HEK293 (cell line): ENCODE measurements at regions of chr7 and their contacts with region 1.

Region 1: DNA sequence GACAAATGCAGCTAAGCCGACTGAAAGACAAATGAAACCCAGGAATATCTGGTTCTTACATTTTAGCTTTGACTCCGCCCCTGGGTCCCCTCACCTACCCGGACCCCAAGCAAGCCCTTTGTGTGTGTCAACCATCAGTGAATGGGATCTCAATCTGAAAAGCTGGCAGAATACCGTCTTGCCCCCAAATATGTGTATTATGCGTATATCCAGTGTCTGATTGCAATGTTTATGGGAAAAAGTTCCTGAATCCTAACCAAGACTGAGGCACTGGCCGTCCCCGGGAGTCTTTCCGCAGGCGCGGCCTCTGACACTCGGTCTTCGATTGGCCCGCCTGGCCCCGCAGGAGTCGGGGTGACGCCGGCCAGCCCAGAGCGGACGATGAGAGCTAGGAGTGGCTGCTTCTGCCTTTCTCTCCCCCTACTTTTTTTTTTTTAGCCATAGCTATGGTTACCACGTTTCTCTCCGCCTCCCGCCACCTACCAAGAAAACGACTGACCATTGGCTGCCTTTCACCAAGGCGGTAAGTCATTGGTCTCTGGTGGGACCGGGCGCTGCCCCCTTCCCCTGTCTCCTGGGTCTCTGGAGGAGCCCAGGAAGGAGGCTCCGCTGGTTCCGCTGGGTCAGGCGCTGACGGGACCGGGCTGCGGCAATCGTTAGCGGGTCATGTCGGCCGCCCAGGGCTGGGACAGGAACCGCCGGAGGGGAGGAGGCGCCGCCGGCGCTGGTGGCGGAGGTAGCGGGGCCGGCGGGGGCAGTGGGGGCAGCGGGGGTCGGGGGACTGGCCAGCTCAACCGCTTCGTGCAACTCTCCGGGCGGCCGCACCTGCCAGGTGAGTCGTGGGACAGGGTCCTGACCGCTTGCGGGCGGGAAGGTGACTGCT is at the start of gene KLHDC10:
- H3K4me3 ChIP-seq: peak within 1 kb of the TSS; percentile 90
- H3K27ac ChIP-seq: peak within 1 kb of the TSS; percentile 68
- H3K4me1 ChIP-seq: no peaks in the 10 kb centered on the region
- CTCF ChIP-seq: no peak

Region 2: GRCh38 chr7:130037703-130038102 is 32.5 kb before region 1 on chr7:
- CTCF ChIA-PET with region 1: no interaction called
- POLR2A ChIA-PET with region 1: no interaction called
- H3K4me3 ChIP-seq: no peak overlapping the region
- H3K27ac ChIP-seq: no peak overlapping the region
- H3K4me1 ChIP-seq: no peaks in the 10 kb centered on the region
- CTCF ChIP-seq: no peak

Region 3: GRCh38 chr7:130084037-130084875 is 14.0 kb after region 1 on chr7:
- CTCF ChIA-PET with region 1: interaction called, 24 read pairs
- POLR2A ChIA-PET with region 1: interaction called, 3 read pairs
- H3K4me3 ChIP-seq: no peak overlapping the region
- H3K27ac ChIP-seq: no peak overlapping the region
- H3K4me1 ChIP-seq: 0 out of 2 replicates have a peak, but pooled peaks cover 4% of the 10 kb centered on the region
- CTCF ChIP-seq: no peak

Region 4: DNA sequence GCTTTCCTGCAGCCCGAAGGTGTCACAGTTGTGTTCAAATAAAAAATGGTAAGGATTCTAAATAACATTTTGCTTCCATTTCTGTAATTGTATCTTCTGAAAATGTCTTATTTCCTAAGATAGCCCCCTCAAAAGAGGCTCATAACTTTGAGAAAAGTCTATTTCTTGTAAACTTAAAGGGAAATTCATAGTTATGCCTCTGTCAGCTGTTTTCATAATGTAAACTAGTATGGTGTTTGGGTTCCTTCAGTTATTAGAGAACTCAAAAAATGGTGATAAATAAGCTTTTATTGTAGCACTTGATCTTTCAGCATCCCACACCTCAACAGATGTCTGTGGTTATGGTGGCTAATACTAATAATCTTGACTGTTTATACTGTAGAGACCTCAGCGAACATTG is 57.2 kb after region 1 on chr7:
- CTCF ChIA-PET with region 1: no interaction called
- POLR2A ChIA-PET with region 1: no interaction called
- H3K4me3 ChIP-seq: no peak overlapping the region
- H3K27ac ChIP-seq: no peak overlapping the region
- H3K4me1 ChIP-seq: peaks cover 7% of the 10 kb centered on the region; the same call in 1 of the 2 replicates
- CTCF ChIP-seq: no peak

Region 5: GRCh38 chr7:130205084-130205947 is 135.1 kb after region 1 on chr7 and contains the start of gene TMEM209:
- CTCF ChIA-PET with region 1: interaction called, 3 read pairs
- POLR2A ChIA-PET with region 1: interaction called, 14 read pairs
- H3K4me3 ChIP-seq: peak within 1 kb of the TSS; percentile 99
- H3K27ac ChIP-seq: peak within 1 kb of the TSS; percentile 92
- H3K4me1 ChIP-seq: no peaks in the 10 kb centered on the region
- CTCF ChIP-seq: no peak

Region 6: DNA sequence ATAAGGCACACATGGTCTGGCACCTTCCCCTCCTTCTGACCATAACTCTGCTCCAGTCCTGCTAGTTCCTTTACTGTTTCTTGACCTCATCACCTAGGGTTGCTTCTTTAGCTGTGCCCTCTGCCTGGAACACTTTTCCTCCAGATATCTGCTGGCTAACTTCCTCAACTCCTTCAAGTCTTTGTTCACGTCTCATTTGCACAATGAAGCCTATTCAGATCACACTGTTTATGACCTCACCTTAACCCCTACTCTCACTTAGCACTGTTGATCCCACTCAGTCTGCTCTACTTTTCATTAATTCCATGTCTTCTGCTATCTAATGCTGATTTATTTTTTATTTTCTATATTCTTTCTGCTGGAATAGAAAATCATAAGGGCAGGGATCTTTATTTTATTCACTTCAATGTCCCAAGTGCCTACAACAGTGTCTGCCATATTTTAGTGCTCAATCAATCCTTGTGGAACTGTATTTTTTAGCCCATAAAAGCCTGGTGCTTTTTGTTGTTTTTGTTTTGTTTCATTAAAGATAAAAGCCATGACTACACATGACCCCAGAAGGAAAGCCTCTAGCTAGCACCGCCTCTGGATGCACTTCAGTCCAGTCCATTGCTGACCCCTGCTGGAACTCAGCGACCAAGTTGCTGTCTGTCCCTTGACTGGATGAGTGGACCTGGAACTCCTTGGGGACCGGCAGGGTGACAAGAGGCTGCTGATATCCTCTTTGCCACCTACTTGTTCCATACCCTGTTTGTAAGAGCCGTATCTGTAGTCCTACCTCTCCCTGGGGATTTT is 651.5 kb after region 1 on chr7:
- CTCF ChIA-PET with region 1: interaction called, 18 read pairs
- POLR2A ChIA-PET with region 1: no interaction called
- H3K4me3 ChIP-seq: no peak overlapping the region
- H3K27ac ChIP-seq: no peak overlapping the region
- H3K4me1 ChIP-seq: no peaks in the 10 kb centered on the region
- CTCF ChIP-seq: peak; percentile 53

Region 7: DNA sequence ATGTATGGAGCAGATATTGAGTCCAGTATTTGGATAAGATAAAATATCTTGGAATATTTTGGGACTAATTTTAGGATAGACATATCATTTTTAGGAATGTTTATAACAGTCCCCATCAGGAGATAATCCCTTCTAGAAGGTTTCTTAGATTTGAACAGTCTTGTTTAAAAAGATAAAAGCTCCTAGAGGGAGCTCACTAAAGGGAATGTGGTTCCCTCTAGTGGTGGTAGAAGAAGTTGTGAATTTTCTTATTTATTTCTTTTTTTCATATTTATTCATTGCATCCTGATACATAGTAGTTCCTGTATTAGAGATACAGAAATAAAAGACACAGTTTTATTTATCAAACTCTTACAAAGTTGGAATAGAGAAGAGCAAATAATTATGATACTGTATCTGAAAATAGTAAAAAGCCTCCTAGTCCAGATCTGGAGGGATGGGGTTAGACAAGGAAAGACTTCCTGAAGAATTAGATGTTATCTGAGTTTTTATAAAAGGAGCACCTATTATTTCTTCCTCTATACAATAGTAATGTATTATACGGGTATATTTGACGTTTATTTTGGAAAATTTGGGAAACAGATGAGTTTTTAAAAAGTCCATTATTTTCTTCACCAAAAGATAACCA is 688.3 kb after region 1 on chr7:
- CTCF ChIA-PET with region 1: interaction called, 17 read pairs
- POLR2A ChIA-PET with region 1: no interaction called
- H3K4me3 ChIP-seq: no peak overlapping the region
- H3K27ac ChIP-seq: no peak overlapping the region
- H3K4me1 ChIP-seq: no peaks in the 10 kb centered on the region
- CTCF ChIP-seq: peak; percentile 33; the same call in 1 of the 2 replicates

Region 8: GRCh38 chr7:130831817-130832481 is 761.7 kb after region 1 on chr7:
- CTCF ChIA-PET with region 1: interaction called, 12 read pairs
- POLR2A ChIA-PET with region 1: interaction called, 3 read pairs
- H3K4me3 ChIP-seq: no peak overlapping the region
- H3K27ac ChIP-seq: no peak overlapping the region
- H3K4me1 ChIP-seq: no peaks in the 10 kb centered on the region
- CTCF ChIP-seq: no peak